ENCODE measurements at regions of chr20 and their contacts with region 1.

Region 1: GRCh38 chr20:62692176-62692575 is 16.5 kb upstream of the NTSR1 start:
- DNase-seq: no peak
- H3K4me3 ChIP-seq: no peak overlapping the region
- H3K27ac ChIP-seq: peak overlapping the region; percentile 85
- H3K4me1 ChIP-seq: peaks cover 55% of the 10 kb centered on the region
- H3K27me3 ChIP-seq: no peaks in the 10 kb centered on the region
- CTCF ChIP-seq: no peak

Region 2: GRCh38 chr20:62327726-62328495 is 364.3 kb before region 1 on chr20:
- CTCF ChIA-PET with region 1: no interaction called
- POLR2A ChIA-PET with region 1: no interaction called
- intact Hi-C with region 1: no loop called
- DNase-seq: no peak
- H3K4me3 ChIP-seq: no peak overlapping the region
- H3K27ac ChIP-seq: no peak overlapping the region
- H3K4me1 ChIP-seq: no peaks in the 10 kb centered on the region
- H3K27me3 ChIP-seq: no peaks in the 10 kb centered on the region
- CTCF ChIP-seq: no peak

Region 3: DNA sequence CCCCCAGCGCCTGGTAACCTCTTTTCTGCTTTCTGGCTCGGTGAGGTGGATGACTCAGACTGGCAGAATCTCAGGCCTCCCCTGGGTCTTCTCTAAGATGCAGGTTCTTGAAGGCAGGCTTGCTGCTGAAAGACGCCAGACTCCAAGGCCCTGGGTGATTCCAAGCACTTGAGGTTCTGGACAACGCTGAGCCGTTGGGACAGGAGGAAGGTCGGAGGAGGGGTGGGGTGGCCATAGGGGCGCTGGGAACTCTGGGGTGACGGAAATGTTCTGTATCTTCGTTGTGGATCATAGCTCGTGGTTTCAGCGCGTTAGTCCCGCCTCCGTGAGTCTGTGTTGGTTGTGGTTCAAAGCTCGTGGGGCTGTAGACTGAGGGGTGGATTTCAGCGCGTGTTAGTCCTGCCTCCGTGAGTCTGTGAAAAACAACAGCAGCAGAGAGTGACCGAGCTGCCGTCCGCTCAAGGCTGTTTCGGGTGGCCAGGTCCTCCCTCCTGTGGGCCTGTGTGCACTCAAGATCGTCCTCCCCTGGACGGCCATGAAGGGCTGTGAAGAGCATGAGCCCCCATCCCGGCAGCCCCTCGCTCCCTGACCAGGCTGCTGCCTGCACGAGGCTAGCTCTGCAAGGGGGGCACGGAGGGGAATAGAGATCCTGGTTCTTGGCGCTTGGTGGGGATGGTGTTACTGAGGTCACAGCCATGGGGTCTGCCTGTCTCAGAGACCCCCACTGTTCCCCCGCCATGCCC is 24.2 kb after region 1 on chr20:
- CTCF ChIA-PET with region 1: no interaction called
- POLR2A ChIA-PET with region 1: no interaction called
- intact Hi-C with region 1: no loop called
- DNase-seq: no peak
- H3K4me3 ChIP-seq: no peak overlapping the region
- H3K27ac ChIP-seq: peak overlapping the region; percentile 22
- H3K4me1 ChIP-seq: peaks cover 5% of the 10 kb centered on the region
- H3K27me3 ChIP-seq: no peaks in the 10 kb centered on the region
- CTCF ChIP-seq: no peak

Region 4: DNA sequence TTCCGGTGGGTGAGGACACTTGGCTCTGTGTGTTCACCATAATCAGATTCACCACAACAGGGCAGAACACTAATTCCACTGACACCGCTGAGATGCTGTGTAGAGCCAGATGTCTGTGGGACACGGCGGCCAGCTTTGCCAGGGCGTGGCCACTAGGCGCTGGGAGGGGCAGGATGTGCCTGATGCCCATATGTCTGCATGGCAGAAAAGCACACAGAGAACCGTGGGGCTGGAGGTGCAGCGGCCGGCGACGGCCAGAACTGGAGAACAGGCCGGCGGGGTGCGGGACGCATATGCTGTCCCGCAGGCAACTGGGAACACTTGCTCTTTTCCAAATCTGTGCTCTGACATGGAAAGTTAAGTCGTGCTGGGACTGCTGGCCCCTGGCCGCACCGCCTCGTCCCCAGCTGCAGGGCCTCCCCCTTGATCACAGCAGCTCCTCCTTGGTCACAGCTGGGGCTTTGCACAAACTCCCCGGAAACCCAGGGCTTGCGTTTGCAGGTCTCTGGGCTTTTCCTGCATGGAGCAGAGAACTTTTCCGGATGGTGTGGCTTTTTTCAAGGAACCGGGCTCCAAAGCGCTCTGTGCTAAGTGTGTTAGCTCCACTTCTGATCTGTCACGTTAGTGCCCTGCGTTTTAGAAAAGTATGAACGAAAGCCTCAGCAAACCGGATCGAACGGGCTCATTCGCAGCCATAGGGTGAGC is 47.6 kb after region 1 on chr20:
- CTCF ChIA-PET with region 1: no interaction called
- POLR2A ChIA-PET with region 1: no interaction called
- intact Hi-C with region 1: loop called (anchors 5 kb)
- DNase-seq: peak; percentile 76
- H3K4me3 ChIP-seq: peak overlapping the region; percentile 14
- H3K27ac ChIP-seq: peak overlapping the region; percentile 97
- H3K4me1 ChIP-seq: peaks cover 70% of the 10 kb centered on the region
- H3K27me3 ChIP-seq: no peaks in the 10 kb centered on the region
- CTCF ChIP-seq: no peak

Region 5: GRCh38 chr20:63056236-63056948 is 364.2 kb after region 1 on chr20:
- CTCF ChIA-PET with region 1: no interaction called
- POLR2A ChIA-PET with region 1: no interaction called
- intact Hi-C with region 1: no loop called
- DNase-seq: peak; percentile 61
- H3K4me3 ChIP-seq: no peak overlapping the region
- H3K27ac ChIP-seq: no peak overlapping the region
- H3K4me1 ChIP-seq: no peaks in the 10 kb centered on the region
- H3K27me3 ChIP-seq: peaks cover 18% of the 10 kb centered on the region
- CTCF ChIP-seq: peak; percentile 97

Region 6: GRCh38 chr20:63116412-63117099 is 424.4 kb after region 1 on chr20:
- CTCF ChIA-PET with region 1: no interaction called
- POLR2A ChIA-PET with region 1: no interaction called
- intact Hi-C with region 1: no loop called
- DNase-seq: peak; percentile 24
- H3K4me3 ChIP-seq: no peak overlapping the region
- H3K27ac ChIP-seq: no peak overlapping the region
- H3K4me1 ChIP-seq: no peaks in the 10 kb centered on the region
- H3K27me3 ChIP-seq: peaks cover 85% of the 10 kb centered on the region
- CTCF ChIP-seq: no peak

Measured in A673 (cell line).